Heart left ventricle (tissue), 16 donors: ENCODE measurements at regions of chr14 and their contacts with region 1.

Region 1: GRCh38 chr14:103715052-103716000 is at the starts of genes XRCC3 and ZFYVE21:
- DNase-seq: peak; percentile 99 to 100 (median 100)
- ATAC-seq: peak; percentile 95 to 98 (median 96)
- H3K4me3 ChIP-seq: peak within 1 kb of the TSS; percentile 64 to 97 (median 82)
- H3K27ac ChIP-seq: peak within 1 kb of the TSS; percentile 71 to 91 (median 84)
- H3K4me1 ChIP-seq: peaks cover 17 to 73% (median 51%) of the 10 kb centered on the region in 12 donors
- H3K27me3 ChIP-seq: no peaks in the 10 kb centered on the region
- CTCF ChIP-seq: no peak
- POLR2A ChIP-seq: peak; percentile 70 to 91
- total RNA-seq, gene XRCC3: 1.9 to 8.7 (median 3.1) TPM
- total RNA-seq, gene ZFYVE21: 44.1 to 79.4 (median 52.5) TPM

Region 2: GRCh38 chr14:103472939-103473338 is 242.4 kb before region 1 on chr14:
- intact Hi-C with region 1: no loop called
- DNase-seq: no peak
- ATAC-seq: no peak
- H3K4me3 ChIP-seq: no peak overlapping the region
- H3K27ac ChIP-seq: no peak overlapping the region
- H3K4me1 ChIP-seq: no peaks in the 10 kb centered on the region
- H3K27me3 ChIP-seq: no peaks in the 10 kb centered on the region
- CTCF ChIP-seq: no peak
- POLR2A ChIP-seq: no peak

Region 3: GRCh38 chr14:103562429-103563225 is 152.7 kb before region 1 on chr14 and contains the starts of genes BAG5 and COA8:
- intact Hi-C with region 1: loop called in 1 of 10 experiments (anchors 10 kb)
- DNase-seq: peak; percentile 87 to 93 (median 90)
- ATAC-seq: peak; percentile 23 to 87 (median 76)
- H3K4me3 ChIP-seq: peak within 1 kb of the TSS; percentile 62 to 99 (median 86)
- H3K27ac ChIP-seq: peak within 1 kb of the TSS; percentile 92 to 99 (median 96)
- H3K4me1 ChIP-seq: peaks cover 3 to 70% (median 56%) of the 10 kb centered on the region in 12 donors
- H3K27me3 ChIP-seq: no peaks in the 10 kb centered on the region
- CTCF ChIP-seq: peak in 4 of 12 donors; percentile 7 to 45 (median 30)
- POLR2A ChIP-seq: peak; percentile 23 to 69
- total RNA-seq, gene BAG5: 15.0 to 22.8 (median 17.0) TPM
- total RNA-seq, gene COA8: 30.6 to 66.5 (median 41.9) TPM

Region 4: GRCh38 chr14:103628684-103629502 is 86.4 kb before region 1 on chr14 and contains the start of gene KLC1:
- intact Hi-C with region 1: loop called in 1 of 10 experiments (anchors 5 kb)
- DNase-seq: peak; percentile 88 to 94 (median 91)
- ATAC-seq: peak; percentile 51 to 86 (median 80)
- H3K4me3 ChIP-seq: peak within 1 kb of the TSS; percentile 83 to 100 (median 95)
- H3K27ac ChIP-seq: peak within 1 kb of the TSS; percentile 97 to 100 (median 99)
- H3K4me1 ChIP-seq: peaks cover 6 to 75% (median 59%) of the 10 kb centered on the region in 12 donors
- H3K27me3 ChIP-seq: no peaks in the 10 kb centered on the region
- CTCF ChIP-seq: peak in 3 of 12 donors; percentile 7 to 17 (median 14)
- POLR2A ChIP-seq: peak in 1 of 2 donors; percentile 85
- total RNA-seq, gene KLC1: 127 to 241 (median 150) TPM

Region 5: GRCh38 chr14:103782376-103782775 is 67.0 kb after region 1 on chr14:
- intact Hi-C with region 1: no loop called
- DNase-seq: no peak
- ATAC-seq: no peak
- H3K4me3 ChIP-seq: no peak overlapping the region
- H3K27ac ChIP-seq: no peak overlapping the region
- H3K4me1 ChIP-seq: no peaks in the 10 kb centered on the region
- H3K27me3 ChIP-seq: no peaks in the 10 kb centered on the region
- CTCF ChIP-seq: no peak
- POLR2A ChIP-seq: no peak